MCF 10A (cell line): ENCODE measurements at regions of chr20 and their contacts with region 1.

Region 1: GRCh38 chr20:3888622-3889488 is at the start of gene PANK2:
- DNase-seq: peak; percentile 99
- H3K4me3 Mint-ChIP-seq: peak within 1 kb of the TSS; percentile 91
- H3K27ac Mint-ChIP-seq: peak within 1 kb of the TSS; percentile 96
- H3K4me1 Mint-ChIP-seq: peaks cover 19% of the 10 kb centered on the region
- H3K27me3 Mint-ChIP-seq: no peaks in the 10 kb centered on the region
- CTCF ChIP-seq: peak; percentile 11
- total RNA-seq, gene PANK2: 29.2 and 32.8 TPM in 2 replicates

Region 2: GRCh38 chr20:3871550-3872297 is 17.1 kb before region 1 on chr20:
- CTCF ChIA-PET with region 1: no interaction called
- POLR2A ChIA-PET with region 1: interaction called, 16 read pairs
- intact Hi-C with region 1: no loop called
- DNase-seq: peak; percentile 42
- H3K4me3 Mint-ChIP-seq: no peak overlapping the region
- H3K27ac Mint-ChIP-seq: peak overlapping the region; percentile 43
- H3K4me1 Mint-ChIP-seq: no peaks in the 10 kb centered on the region
- H3K27me3 Mint-ChIP-seq: no peaks in the 10 kb centered on the region
- CTCF ChIP-seq: no peak

Region 3: GRCh38 chr20:3911956-3912355 is 23.1 kb after region 1 on chr20:
- CTCF ChIA-PET with region 1: interaction called, 4 read pairs
- POLR2A ChIA-PET with region 1: interaction called, 13 read pairs
- intact Hi-C with region 1: no loop called
- DNase-seq: no peak
- H3K4me3 Mint-ChIP-seq: no peak overlapping the region
- H3K27ac Mint-ChIP-seq: no peak overlapping the region
- H3K4me1 Mint-ChIP-seq: peaks cover 7% of the 10 kb centered on the region
- H3K27me3 Mint-ChIP-seq: no peaks in the 10 kb centered on the region
- CTCF ChIP-seq: no peak

Region 4: DNA sequence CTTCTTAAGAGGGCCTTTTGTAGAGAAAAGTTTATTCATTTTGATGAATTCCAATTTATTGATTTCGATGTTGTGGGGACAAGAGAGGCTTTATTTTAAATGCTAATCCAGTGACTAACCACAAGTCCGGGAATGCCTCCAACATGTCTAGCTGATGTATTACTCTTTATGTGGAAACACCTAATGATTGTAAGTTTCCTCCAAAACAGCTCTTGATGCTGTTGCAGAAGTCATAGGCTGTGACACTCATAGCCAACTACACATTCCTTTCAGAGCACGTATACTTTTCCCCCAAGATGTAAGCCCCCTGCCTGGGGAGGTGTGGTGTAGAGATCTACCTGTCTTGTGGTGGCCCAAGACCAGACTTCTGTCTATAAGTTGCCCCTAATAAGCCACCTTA is 187.8 kb after region 1 on chr20:
- CTCF ChIA-PET with region 1: interaction called, 4 read pairs
- POLR2A ChIA-PET with region 1: no interaction called
- intact Hi-C with region 1: loop called (anchors 1 kb)
- DNase-seq: peak; percentile 78
- H3K4me3 Mint-ChIP-seq: no peak overlapping the region
- H3K27ac Mint-ChIP-seq: peak overlapping the region; percentile 44
- H3K4me1 Mint-ChIP-seq: peaks cover 28% of the 10 kb centered on the region
- H3K27me3 Mint-ChIP-seq: no peaks in the 10 kb centered on the region
- CTCF ChIP-seq: no peak

Region 5: DNA sequence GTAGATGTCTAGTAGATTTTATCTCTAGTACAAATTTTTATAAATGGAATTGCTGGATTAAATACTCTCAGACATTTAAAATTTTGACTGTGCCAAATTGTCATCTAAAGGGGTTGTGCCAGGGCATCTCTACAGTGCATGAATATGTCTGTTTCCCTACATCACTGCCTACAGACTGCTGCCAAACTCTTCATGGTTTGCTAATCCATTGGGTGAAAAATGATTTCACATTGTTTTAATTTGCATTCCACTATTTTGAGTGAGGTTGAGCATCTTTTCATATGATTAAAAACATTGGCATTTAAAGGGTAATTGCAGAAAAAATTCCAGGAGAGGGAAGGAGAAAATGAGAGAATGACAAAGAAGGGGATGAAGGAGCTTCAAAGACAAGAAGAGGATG is 394.2 kb after region 1 on chr20:
- CTCF ChIA-PET with region 1: no interaction called
- POLR2A ChIA-PET with region 1: no interaction called
- intact Hi-C with region 1: no loop called
- DNase-seq: no peak
- H3K4me3 Mint-ChIP-seq: no peak overlapping the region
- H3K27ac Mint-ChIP-seq: no peak overlapping the region
- H3K4me1 Mint-ChIP-seq: no peaks in the 10 kb centered on the region
- H3K27me3 Mint-ChIP-seq: no peaks in the 10 kb centered on the region
- CTCF ChIP-seq: no peak